ENCODE measurements at regions of chr20 and their contacts with region 1.

Region 1: DNA sequence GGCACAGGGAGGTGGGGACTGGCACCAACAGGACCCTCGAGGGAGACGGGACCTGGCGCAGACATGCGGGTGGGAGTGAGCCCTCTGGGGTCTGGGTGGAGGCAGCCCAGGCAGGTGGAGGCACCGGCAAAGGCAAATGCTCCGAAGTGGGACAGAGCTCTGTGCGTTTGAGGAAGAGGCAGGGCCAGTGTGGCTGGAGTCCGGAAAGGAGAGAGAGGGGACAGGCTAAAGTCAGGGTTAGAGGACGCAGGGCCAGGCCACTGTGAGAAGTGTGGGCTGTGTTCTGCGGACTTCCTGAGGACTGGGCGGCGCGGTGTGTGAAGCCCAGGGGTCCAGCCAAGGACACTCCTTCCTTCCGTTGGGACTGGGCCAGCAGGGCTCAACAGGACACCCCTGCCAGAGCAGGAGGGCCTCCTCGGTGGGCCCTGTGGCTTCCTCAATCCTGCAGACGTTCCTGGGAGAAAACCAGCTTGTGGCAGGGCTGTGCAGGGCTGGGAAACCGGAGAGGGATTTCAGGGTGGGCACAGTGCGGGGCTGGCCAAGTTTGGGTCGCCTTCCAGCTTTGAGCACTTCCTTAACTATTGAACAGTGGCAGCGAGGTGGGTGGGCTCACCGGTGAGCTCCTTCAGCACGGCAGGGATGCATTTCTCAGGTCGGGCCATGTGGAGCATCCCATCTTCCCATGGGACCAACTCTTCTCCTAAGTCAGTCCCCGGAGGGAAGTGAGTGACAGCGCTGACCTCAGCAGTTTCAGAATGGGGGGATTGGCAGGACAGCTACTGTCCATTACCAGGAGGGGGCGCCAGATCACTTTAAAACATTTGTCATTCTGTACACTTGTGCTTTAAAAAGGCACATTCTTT is 22.5 kb downstream of the MOCS3 start:
- DNase-seq: peak; percentile 36 to 59 (median 45)
- H3K4me3 ChIP-seq: no peak overlapping the region
- H3K4me3 Mint-ChIP-seq: no peak overlapping the region
- H3K27ac ChIP-seq: no peak overlapping the region
- H3K27ac Mint-ChIP-seq: no peak overlapping the region
- H3K4me1 ChIP-seq: peaks cover 4% of the 10 kb centered on the region
- H3K4me1 Mint-ChIP-seq: peaks cover 0 to 8% (median 4%) of the 10 kb centered on the region in 4 donors
- H3K27me3 ChIP-seq: no peaks in the 10 kb centered on the region
- H3K27me3 Mint-ChIP-seq: peaks cover 28 to 29% of the 10 kb centered on the region in 2 donors

Region 2: DNA sequence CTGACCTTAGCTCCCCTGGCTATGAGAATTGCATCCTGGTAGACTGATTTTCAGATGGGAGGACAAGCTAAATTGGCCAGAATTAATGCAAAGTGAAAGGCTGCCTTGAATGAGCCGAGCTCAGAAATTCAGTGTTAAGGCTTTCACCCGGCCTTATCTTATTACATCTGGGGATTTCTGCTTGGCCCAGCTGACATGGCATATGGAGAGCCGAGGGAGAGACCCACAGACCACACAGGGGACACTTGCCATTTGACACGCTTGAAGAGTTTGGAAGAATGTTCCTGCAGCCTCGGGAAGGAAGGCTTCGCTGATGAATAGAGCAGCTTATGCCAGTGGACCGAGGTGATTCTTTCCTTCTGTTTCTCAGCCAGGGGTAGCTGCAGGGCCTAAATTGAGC is 13.5 kb before region 1 on chr20:
- CTCF ChIA-PET with region 1: interaction called, 18 read pairs
- POLR2A ChIA-PET with region 1: no interaction called
- intact Hi-C with region 1: no loop called
- DNase-seq: no peak
- H3K4me3 ChIP-seq: no peak overlapping the region
- H3K4me3 Mint-ChIP-seq: no peak overlapping the region
- H3K27ac ChIP-seq: no peak overlapping the region
- H3K27ac Mint-ChIP-seq: no peak overlapping the region
- H3K4me1 ChIP-seq: no peaks in the 10 kb centered on the region
- H3K4me1 Mint-ChIP-seq: no peaks in the 10 kb centered on the region
- H3K27me3 ChIP-seq: no peaks in the 10 kb centered on the region
- H3K27me3 Mint-ChIP-seq: no peaks in the 10 kb centered on the region

Region 3: GRCh38 chr20:50992733-50993457 is 11.8 kb after region 1 on chr20:
- CTCF ChIA-PET with region 1: interaction called, 22 read pairs
- POLR2A ChIA-PET with region 1: no interaction called
- intact Hi-C with region 1: no loop called
- DNase-seq: peak; percentile 22 to 55 (median 33)
- H3K4me3 ChIP-seq: no peak overlapping the region
- H3K4me3 Mint-ChIP-seq: no peak overlapping the region
- H3K27ac ChIP-seq: no peak overlapping the region
- H3K27ac Mint-ChIP-seq: no peak overlapping the region
- H3K4me1 ChIP-seq: no peaks in the 10 kb centered on the region
- H3K4me1 Mint-ChIP-seq: no peaks in the 10 kb centered on the region
- H3K27me3 ChIP-seq: no peaks in the 10 kb centered on the region
- H3K27me3 Mint-ChIP-seq: peaks cover 0 to 18% of the 10 kb centered on the region in 2 donors

Measured in CD4-positive, alpha-beta memory T cell (primary cell).